ENCODE measurements at regions of chrX and their contacts with region 1.

Region 1: DNA sequence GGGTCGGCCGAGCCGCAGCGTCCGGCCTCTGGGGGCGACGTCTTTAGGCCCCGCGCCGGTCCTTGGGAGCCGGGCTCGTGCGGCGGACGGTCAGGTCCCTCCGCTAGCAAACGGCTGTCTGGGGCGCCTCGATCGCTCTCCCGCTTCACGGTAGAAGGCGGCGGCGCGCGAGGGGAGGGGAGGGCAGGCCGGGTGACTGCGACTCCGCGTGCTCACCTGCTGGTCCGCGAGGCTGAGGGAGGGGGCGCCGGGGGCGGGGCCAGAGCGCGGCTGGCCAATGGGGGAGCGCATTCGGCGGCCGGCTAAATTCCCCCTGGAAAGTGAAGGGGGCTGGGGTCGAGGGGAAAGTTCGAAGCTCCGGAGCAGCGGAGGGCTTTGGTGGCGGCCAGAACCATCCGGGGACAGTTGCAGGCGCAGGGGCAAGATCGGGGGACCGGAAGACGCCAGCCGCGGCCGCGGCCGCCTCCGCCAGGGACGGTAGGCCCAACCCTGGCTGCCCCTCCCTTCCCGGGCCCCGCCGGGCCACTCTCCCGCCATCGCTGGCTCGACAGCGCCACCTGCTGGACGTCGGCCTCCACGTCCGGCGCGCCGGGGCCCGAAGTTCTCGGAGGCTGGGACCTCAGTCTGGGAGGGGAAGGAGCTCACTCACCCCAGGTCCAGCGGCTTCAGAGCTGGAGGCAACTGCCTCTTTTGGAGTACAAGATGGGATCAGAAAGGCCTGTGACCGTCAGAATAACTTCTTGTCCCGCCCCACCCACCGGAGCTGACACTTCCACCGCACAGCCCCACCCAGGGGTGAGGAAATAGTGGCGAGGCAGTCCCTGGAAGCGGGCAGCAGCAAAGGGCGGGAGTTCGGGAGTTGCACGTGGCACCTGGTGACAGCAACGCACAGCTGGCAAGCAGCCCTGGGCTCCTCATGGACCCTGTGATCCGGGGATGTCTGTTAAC is 49.9 kb downstream of the ELF4 start:
- H3K4me3 Mint-ChIP-seq: peak overlapping the region; percentile 82
- H3K27ac Mint-ChIP-seq: peak overlapping the region; percentile 90
- H3K4me1 Mint-ChIP-seq: peaks cover 16% of the 10 kb centered on the region
- H3K27me3 Mint-ChIP-seq: no peaks in the 10 kb centered on the region

Region 2: GRCh38 chrX:129925305-129926092 is 134.9 kb before region 1 on chrX:
- intact Hi-C with region 1: loop called (anchors 10 kb)
- H3K4me3 Mint-ChIP-seq: no peak overlapping the region
- H3K27ac Mint-ChIP-seq: no peak overlapping the region
- H3K4me1 Mint-ChIP-seq: peaks cover 18% of the 10 kb centered on the region
- H3K27me3 Mint-ChIP-seq: no peaks in the 10 kb centered on the region